HEK293 (cell line): ENCODE measurements at regions of chr19 and their contacts with region 1.

Region 1: GRCh38 chr19:9934132-9934950 is 2.0 kb downstream of the OLFM2 start:
- H3K4me3 ChIP-seq: no peak overlapping the region
- H3K27ac ChIP-seq: no peak overlapping the region
- H3K4me1 ChIP-seq: peaks cover 6% of the 10 kb centered on the region; the same call in 1 of the 2 replicates
- CTCF ChIP-seq: peak; percentile 86

Region 2: DNA sequence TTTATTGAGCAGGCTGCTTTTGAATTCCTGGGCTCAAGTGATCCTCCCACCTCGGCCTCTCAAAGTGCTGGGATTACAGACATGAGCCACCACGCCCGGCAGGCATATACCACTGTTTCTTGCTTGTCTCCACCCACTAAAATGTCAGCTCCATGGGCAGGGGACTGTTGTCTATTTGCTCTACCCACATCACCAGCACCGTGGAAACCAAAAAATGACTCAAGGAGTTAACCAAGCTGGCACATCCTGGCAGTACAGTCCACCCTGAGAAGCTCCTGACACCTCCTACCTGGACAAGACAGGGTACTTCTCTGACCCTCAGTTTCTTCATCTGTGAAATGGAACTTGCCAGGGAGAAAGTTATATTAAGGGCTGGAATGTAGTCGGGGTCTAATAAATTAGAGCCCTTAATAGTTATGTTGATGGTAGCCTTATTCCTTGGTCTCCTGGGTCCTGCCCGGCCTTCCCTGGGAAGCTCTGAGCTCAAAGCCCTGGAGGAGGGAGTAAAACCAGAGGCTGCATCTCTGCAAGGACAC is 92.9 kb after region 1 on chr19:
- CTCF ChIA-PET with region 1: interaction called, 54 read pairs
- POLR2A ChIA-PET with region 1: no interaction called
- H3K4me3 ChIP-seq: no peak overlapping the region
- H3K27ac ChIP-seq: no peak overlapping the region
- H3K4me1 ChIP-seq: peaks cover 5% of the 10 kb centered on the region; the same call in 1 of the 2 replicates
- CTCF ChIP-seq: no peak

Region 3: DNA sequence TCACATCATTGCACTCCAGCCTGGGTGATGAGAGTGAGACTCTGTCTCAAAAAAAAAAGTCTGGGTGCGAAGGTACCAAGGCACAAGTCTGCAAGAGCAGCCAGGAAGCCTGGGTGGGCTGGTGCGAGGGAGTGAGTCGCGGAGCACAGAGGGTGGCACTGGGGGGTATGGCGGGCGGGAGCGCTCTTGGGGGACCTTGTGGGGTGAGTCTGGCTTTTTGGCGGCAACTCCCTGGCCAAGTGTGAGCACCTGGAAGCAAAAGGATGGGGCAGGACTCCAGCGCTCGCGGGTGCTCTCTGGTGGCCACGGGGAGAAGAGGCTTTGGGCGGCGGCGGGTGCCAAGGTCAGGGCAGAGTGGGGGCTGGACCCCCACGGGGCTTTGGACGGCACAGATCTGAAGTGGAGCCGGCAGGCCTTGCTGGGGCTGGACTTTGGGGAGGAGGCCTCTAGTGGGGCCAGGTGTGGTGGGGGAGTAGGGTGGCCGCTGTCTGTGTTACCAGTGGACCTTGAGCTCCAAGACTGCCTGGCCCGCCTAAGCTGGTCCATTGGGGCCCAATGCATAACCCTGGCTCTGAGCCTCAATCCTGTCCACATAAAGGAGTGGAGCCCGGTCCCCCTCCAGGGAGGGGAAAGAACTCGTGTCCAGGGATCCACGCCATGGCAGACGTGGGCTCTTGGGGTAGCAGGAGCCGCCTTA is 178.7 kb after region 1 on chr19:
- CTCF ChIA-PET with region 1: interaction called, 27 read pairs
- POLR2A ChIA-PET with region 1: interaction called, 4 read pairs
- H3K4me3 ChIP-seq: no peak overlapping the region
- H3K27ac ChIP-seq: no peak overlapping the region
- H3K4me1 ChIP-seq: no peaks in the 10 kb centered on the region
- CTCF ChIP-seq: peak; percentile 81